ENCODE measurements at regions of chr3 and their contacts with region 1.

Region 1: GRCh38 chr3:15964605-15965442 is 167.0 kb upstream of the ANKRD28 start:
- DNase-seq: no peak
- H3K4me3 Mint-ChIP-seq: no peak overlapping the region
- H3K27ac Mint-ChIP-seq: no peak overlapping the region
- H3K4me1 Mint-ChIP-seq: no peaks in the 10 kb centered on the region
- H3K27me3 Mint-ChIP-seq: peaks cover 3% of the 10 kb centered on the region

Region 2: DNA sequence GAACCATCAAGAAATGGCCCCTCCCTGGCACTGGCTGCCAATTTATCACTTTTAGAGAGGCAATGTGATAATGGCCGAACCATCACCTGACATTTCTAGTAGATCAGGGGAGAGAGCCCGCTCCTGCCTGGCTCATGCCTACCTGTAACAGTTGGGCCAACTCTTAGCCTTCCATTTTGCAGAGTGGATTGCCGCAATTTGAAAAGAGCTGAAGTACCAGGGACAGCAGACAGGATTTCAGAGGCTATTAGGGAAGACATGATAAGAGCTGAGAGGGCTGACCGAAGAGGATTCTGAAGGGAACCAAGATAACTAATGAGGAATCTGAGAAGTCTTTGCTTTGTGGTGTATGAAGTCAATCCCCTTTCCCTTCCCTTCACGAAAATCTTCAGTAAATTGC is 45.8 kb before region 1 on chr3:
- CTCF ChIA-PET with region 1: no interaction called
- POLR2A ChIA-PET with region 1: no interaction called
- DNase-seq: no peak
- H3K4me3 Mint-ChIP-seq: no peak overlapping the region
- H3K27ac Mint-ChIP-seq: no peak overlapping the region
- H3K4me1 Mint-ChIP-seq: peaks cover 2% of the 10 kb centered on the region
- H3K27me3 Mint-ChIP-seq: peaks cover 3% of the 10 kb centered on the region

Region 3: DNA sequence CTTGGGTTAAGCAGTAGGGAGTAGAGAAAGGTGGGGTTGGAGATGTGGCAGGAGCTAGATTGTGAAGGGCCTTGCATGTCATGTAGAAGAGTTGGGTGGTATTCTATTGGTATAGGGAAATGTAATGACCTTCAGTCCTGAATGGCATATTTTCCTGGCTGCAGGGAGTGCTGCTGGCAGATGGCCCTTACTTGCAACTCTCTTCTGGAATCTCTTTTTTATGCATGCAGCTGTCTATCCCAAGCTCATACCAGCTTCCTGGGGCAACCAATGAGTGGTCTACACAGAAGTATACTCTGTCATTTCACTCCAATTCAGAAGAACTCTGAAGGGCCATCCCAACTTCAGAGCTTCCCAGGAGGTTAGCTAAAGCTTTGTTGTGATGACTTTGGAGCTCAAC is 22.4 kb before region 1 on chr3:
- CTCF ChIA-PET with region 1: no interaction called
- POLR2A ChIA-PET with region 1: no interaction called
- DNase-seq: no peak
- H3K4me3 Mint-ChIP-seq: no peak overlapping the region
- H3K27ac Mint-ChIP-seq: no peak overlapping the region
- H3K4me1 Mint-ChIP-seq: peaks cover 5% of the 10 kb centered on the region
- H3K27me3 Mint-ChIP-seq: peaks cover 10% of the 10 kb centered on the region

Region 4: DNA sequence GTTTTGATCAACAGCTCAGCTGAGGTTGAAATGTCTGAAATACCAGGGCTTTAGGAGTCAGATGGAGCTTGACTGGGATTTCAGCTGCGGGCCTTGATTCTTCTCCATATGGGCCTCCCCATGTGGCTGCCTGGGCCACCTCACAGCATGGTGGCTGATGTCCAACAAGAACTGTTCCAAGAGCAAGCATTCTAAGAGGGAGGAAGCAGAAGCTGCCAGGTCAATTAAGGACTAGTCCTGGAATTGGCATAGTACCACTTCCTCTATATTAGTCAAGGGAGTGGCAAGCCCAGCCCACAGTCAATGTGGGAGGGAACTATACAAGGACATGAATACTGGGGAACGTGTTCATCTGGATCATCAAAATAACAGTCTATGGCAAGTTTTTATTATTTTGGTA is 14.7 kb after region 1 on chr3:
- CTCF ChIA-PET with region 1: interaction called, 10 read pairs
- POLR2A ChIA-PET with region 1: no interaction called
- DNase-seq: no peak
- H3K4me3 Mint-ChIP-seq: no peak overlapping the region
- H3K27ac Mint-ChIP-seq: no peak overlapping the region
- H3K4me1 Mint-ChIP-seq: no peaks in the 10 kb centered on the region
- H3K27me3 Mint-ChIP-seq: peaks cover 2% of the 10 kb centered on the region

Measured in activated CD4-positive, alpha-beta T cell treated with anti-CD3 and anti-CD28 coated beads, Interleukin-2, amount 10 ng/mL, durations not matched to agents 7 days and 5 days (primary cell).